ENCODE measurements at regions of chr3 and their contacts with region 1.

Region 1: GRCh38 chr3:80004618-80005017 is 236.8 kb upstream of the ROBO1 start:
- DNase-seq: no peak
- H3K4me3 ChIP-seq: no peak overlapping the region
- CTCF ChIP-seq: no peak
- POLR2A ChIP-seq: no peak

Region 2: GRCh38 chr3:79769229-79769628 is 235.4 kb before region 1 on chr3:
- intact Hi-C with region 1: no loop called
- DNase-seq: no peak
- H3K4me3 ChIP-seq: no peak overlapping the region
- CTCF ChIP-seq: no peak
- POLR2A ChIP-seq: no peak

Region 3: GRCh38 chr3:79902151-79902550 is 102.5 kb before region 1 on chr3:
- intact Hi-C with region 1: no loop called
- DNase-seq: no peak
- H3K4me3 ChIP-seq: no peak overlapping the region
- CTCF ChIP-seq: no peak
- POLR2A ChIP-seq: no peak

Region 4: DNA sequence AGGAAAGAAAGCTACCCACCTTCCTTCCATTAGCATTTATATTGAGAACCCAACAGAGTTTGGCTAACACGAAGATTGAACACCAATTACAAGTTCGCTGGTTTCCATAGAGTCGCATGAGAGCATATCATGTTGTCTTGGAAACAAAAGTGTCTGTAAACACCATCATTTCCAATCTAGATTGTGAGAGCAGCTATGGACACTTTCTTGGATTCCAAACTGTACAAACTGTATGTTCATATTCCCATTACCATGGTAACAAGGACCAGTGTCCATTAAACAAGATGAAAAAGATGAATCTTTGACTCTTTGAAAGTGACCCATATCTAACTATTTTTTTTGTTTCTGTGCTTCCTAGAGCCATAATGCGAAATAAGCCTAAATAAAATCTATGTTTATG is 293.1 kb after region 1 on chr3:
- intact Hi-C with region 1: no loop called
- DNase-seq: no peak
- H3K4me3 ChIP-seq: no peak overlapping the region
- CTCF ChIP-seq: no peak
- POLR2A ChIP-seq: no peak

Region 5: GRCh38 chr3:80492162-80492561 is 487.5 kb after region 1 on chr3:
- intact Hi-C with region 1: loop called (anchors 5 kb)
- DNase-seq: no peak
- H3K4me3 ChIP-seq: no peak overlapping the region
- CTCF ChIP-seq: no peak
- POLR2A ChIP-seq: no peak